ENCODE measurements at regions of chr15 and their contacts with region 1.

Region 1: DNA sequence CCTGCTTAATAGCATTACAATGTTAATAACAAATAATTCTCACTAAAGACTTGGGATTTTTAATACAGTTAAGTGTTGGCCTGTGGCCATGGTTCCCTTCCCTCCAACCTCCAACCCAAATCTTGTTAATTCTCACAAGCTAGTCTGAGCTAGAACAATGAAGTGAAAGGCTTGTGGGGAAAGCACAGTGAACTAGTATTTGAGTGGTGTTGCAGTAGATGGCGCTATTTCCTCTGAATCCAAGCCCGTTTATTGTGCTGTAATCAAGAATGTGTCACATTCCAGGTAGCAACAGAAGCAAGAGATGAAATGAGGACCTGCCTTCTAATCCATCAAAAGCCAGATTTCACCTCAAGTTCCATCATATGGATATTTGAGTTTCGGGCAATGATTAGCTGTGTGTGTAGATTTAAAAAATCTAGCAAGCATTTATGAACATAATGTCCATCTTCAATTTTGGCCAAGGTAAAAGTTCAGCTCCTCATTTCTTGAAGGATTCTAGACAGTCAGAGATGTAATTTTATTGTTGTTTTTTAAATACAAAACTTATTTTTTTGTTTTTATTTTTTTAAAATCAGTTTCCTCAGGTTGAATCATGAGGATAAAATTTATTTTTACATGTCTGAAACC is 160.7 kb downstream of the SQOR start:
- DNase-seq: no peak
- ATAC-seq: peak in 1 of 2 donors; percentile 47

Region 2: DNA sequence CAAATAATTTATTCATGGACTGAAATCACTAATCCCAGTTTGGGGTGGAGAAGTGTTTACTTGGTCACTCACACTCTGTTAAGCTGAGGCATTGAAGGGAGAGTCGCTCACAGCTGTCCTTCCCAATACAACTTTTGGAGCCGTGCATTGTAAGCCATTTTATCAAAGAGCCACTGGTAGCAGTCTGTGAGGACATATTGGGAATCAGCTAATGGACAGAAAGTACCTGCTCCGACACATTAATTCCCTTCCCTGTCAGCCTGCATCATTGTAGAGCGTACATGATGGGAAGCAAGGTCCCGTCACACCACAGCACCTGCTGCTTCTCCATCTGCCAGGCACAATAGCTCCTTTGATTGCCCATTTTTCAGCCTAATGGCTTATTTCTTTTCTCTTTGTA is 482.5 kb after region 1 on chr15:
- intact Hi-C with region 1: loop called in 1 of 2 experiments (anchors 10 kb)
- DNase-seq: no peak
- ATAC-seq: no peak

Region 3: DNA sequence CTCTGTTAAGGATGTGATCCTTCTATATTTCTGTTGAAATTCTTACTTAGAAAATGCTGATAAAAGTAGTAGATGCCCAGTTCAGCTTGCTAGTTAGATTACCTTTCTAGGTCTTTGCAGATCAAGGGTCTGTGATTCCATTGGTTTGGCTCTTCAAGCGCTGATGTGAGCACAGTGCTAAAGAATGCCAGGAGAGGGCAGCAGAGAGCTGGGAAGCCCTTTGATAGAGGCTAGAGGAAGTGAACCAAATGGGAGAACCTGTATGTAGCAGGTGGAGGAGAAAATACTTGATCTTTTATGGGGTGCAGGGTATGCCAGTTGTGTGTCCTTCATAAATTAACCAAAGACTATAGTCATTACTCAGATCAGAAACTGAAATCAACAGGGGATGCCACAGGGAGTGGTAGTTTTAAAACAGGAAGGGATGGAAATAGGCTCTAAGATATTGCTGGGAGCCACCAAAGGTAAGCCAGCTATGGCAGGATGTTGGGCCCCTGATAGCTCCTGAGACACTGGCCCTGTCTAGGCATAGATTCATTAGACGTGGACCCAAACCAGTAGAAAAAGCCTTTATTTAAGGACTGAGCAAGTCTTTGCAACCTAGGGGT is 516.7 kb after region 1 on chr15:
- intact Hi-C with region 1: loop called in 1 of 2 experiments (anchors 10 kb)
- DNase-seq: peak; percentile 70
- ATAC-seq: peak; percentile 84 to 88

Measured in left cardiac atrium (tissue), 4 donors.